Activated CD4-positive, alpha-beta memory T cell treated with anti-CD3 and anti-CD28 coated beads for 36 hours (primary cell): ENCODE measurements at regions of chr20 and their contacts with region 1.

Region 1: DNA sequence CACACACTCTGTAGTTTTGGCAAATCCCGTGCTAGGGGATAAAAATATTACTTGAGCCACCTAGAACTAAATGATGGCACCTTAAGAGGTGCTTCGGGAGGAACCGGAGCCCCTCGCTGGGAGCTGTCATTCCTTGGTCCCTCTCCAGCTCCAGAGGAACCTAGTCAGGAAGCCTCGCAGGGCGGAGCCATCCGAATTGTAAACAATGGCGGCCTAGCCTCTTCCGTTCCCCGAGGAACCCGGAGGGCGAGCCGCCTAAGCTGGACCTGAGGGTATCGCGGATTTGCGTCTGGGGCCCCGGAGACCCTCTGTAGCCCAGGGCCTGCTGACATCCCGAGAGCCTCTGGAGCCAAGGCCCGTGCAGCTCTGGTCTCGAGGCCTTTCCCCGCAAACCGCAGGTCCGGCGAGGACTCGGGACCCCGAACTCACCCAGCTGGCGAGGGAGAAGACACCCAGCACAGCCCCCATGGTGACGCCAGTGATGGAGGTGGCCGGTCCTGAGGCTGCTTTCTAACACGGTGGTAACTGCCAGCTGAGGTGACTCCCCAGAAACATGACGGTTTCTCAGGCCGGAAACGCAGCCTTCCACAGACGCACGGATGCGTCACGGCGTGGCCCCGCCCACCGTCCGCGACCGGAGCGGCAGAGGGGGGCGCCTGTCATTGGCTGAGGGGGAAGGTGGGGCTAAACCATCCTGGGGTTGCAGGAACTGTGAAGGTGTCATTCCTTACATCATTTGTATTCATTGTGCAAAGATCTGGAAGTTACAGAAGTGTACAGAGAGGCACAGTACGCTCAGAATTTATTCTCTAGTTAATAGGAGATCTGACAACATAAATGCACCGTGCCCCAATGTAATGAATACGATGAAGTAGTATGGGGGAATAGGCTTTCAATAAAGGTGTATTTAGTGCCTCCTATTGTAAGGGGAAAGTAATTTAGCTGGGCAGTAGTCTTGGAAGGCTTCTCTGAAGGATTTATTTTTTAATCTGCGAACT is at the start of gene SERINC3:
- DNase-seq: peak; percentile 98
- H3K4me3 Mint-ChIP-seq: peak within 1 kb of the TSS; percentile 83
- H3K27ac Mint-ChIP-seq: peak within 1 kb of the TSS; percentile 88
- H3K4me1 Mint-ChIP-seq: peaks cover 53% of the 10 kb centered on the region
- H3K27me3 Mint-ChIP-seq: no peaks in the 10 kb centered on the region
- total RNA-seq, gene SERINC3: 57.3 to 58.6 TPM

Region 2: GRCh38 chr20:43456809-43457639 is 1064.8 kb before region 1 on chr20:
- CTCF ChIA-PET with region 1: no interaction called
- POLR2A ChIA-PET with region 1: no interaction called
- intact Hi-C with region 1: loop called (anchors 5 kb)
- DNase-seq: peak; percentile 91
- H3K4me3 Mint-ChIP-seq: peak overlapping the region; percentile 90
- H3K27ac Mint-ChIP-seq: peak overlapping the region; percentile 100
- H3K4me1 Mint-ChIP-seq: peaks cover 39% of the 10 kb centered on the region
- H3K27me3 Mint-ChIP-seq: peaks cover 5% of the 10 kb centered on the region

Region 3: GRCh38 chr20:44475694-44476560 is 45.9 kb before region 1 on chr20 and contains the start of gene TTPAL:
- CTCF ChIA-PET with region 1: interaction called, 10 read pairs
- POLR2A ChIA-PET with region 1: interaction called, 4 read pairs
- intact Hi-C with region 1: loop called (anchors 2 kb)
- DNase-seq: peak; percentile 94
- H3K4me3 Mint-ChIP-seq: peak within 1 kb of the TSS; percentile 94
- H3K27ac Mint-ChIP-seq: peak within 1 kb of the TSS; percentile 93
- H3K4me1 Mint-ChIP-seq: peaks cover 22% of the 10 kb centered on the region
- H3K27me3 Mint-ChIP-seq: no peaks in the 10 kb centered on the region
- total RNA-seq, gene TTPAL: 18.1 to 18.6 TPM

Region 4: GRCh38 chr20:44532259-44532980 is 10.6 kb after region 1 on chr20:
- CTCF ChIA-PET with region 1: interaction called, 3 read pairs
- POLR2A ChIA-PET with region 1: no interaction called
- intact Hi-C with region 1: loop called (anchors 1 kb)
- DNase-seq: no peak
- H3K4me3 Mint-ChIP-seq: no peak overlapping the region
- H3K27ac Mint-ChIP-seq: no peak overlapping the region
- H3K4me1 Mint-ChIP-seq: peaks cover 3% of the 10 kb centered on the region
- H3K27me3 Mint-ChIP-seq: peaks cover 2% of the 10 kb centered on the region

Region 5: DNA sequence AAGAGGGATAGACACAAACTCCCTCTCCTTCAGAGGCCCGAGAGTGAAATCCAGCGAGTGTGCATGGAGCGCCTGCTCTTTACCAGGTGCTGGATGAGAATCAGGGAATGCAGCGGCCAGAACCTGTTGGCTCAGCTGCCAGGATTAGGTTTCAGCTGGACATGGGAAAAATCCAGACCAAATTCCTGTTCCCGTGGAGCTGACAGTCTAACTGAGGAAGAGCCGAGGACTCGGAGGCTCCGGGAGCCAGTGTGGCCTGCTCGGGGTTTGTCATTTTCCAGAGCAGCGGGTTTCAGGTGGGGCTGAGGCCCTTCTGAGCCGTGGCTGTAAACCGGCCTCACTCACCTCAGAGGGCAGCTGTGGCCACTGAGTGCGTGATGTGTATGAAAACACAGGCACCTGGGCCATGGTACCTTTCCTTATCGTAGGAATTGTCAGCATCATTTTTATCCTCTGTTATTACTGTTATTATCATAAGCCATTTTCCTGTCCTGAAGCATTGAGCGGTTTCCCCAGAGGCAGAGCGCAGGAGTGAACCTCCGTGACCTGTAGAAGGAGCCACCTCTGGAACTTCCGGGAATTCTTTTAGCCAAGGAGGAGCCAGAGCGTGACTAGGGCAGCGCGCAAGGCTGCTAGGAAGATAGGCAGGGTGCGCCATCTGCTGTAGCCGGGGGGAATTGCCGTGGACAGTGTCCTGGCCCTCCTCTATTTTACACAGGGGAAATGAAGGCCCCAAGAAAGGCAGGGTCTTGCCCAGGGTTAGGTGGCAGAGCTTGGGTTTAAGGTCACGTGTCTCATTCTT is 87.9 kb after region 1 on chr20:
- CTCF ChIA-PET with region 1: interaction called, 5 read pairs
- POLR2A ChIA-PET with region 1: no interaction called
- intact Hi-C with region 1: loop called (anchors 1 kb)
- DNase-seq: peak; percentile 87
- H3K4me3 Mint-ChIP-seq: no peak overlapping the region
- H3K27ac Mint-ChIP-seq: peak overlapping the region; percentile 52
- H3K4me1 Mint-ChIP-seq: peaks cover 8% of the 10 kb centered on the region
- H3K27me3 Mint-ChIP-seq: no peaks in the 10 kb centered on the region